B cell (primary cell): ENCODE measurements at regions of chr7 and their contacts with region 1.

Region 1: GRCh38 chr7:149261829-149262617 is at the start of gene ZNF783:
- DNase-seq: peak; percentile 94
- ATAC-seq: peak; percentile 93
- H3K4me3 ChIP-seq: peak within 1 kb of the TSS in 4 of 5 experiments; percentile 64 to 75 (median 68)
- H3K4me3 Mint-ChIP-seq: peak within 1 kb of the TSS; percentile 94
- H3K27ac ChIP-seq: peak within 1 kb of the TSS; percentile 69 to 76
- H3K27ac Mint-ChIP-seq: peak within 1 kb of the TSS; percentile 92
- H3K4me1 ChIP-seq: peaks cover 13 to 17% of the 10 kb centered on the region in 2 donors
- H3K4me1 Mint-ChIP-seq: peaks cover 21% of the 10 kb centered on the region
- H3K27me3 ChIP-seq: no peaks in the 10 kb centered on the region
- H3K27me3 Mint-ChIP-seq: no peaks in the 10 kb centered on the region
- CTCF ChIP-seq: peak; percentile 86
- total RNA-seq, gene ZNF783: 43.8 and 44.8 TPM in 2 replicates

Region 2: GRCh38 chr7:148916186-148916585 is 345.8 kb before region 1 on chr7:
- CTCF ChIA-PET with region 1: no interaction called
- POLR2A ChIA-PET with region 1: no interaction called
- intact Hi-C with region 1: no loop called
- DNase-seq: no peak
- ATAC-seq: no peak
- H3K4me3 ChIP-seq: no peak overlapping the region
- H3K4me3 Mint-ChIP-seq: no peak overlapping the region
- H3K27ac ChIP-seq: no peak overlapping the region
- H3K27ac Mint-ChIP-seq: no peak overlapping the region
- H3K4me1 ChIP-seq: peaks cover 9 to 30% of the 10 kb centered on the region in 2 donors
- H3K4me1 Mint-ChIP-seq: peaks cover 33% of the 10 kb centered on the region
- H3K27me3 ChIP-seq: no peaks in the 10 kb centered on the region
- H3K27me3 Mint-ChIP-seq: no peaks in the 10 kb centered on the region
- CTCF ChIP-seq: no peak

Region 3: GRCh38 chr7:149202831-149203231 is 59.2 kb before region 1 on chr7:
- CTCF ChIA-PET with region 1: no interaction called
- POLR2A ChIA-PET with region 1: no interaction called
- intact Hi-C with region 1: no loop called
- DNase-seq: no peak
- ATAC-seq: no peak
- H3K4me3 ChIP-seq: no peak overlapping the region
- H3K4me3 Mint-ChIP-seq: no peak overlapping the region
- H3K27ac ChIP-seq: no peak overlapping the region
- H3K27ac Mint-ChIP-seq: no peak overlapping the region
- H3K4me1 ChIP-seq: no peaks in the 10 kb centered on the region
- H3K4me1 Mint-ChIP-seq: peaks cover 10% of the 10 kb centered on the region
- H3K27me3 ChIP-seq: no peaks in the 10 kb centered on the region
- H3K27me3 Mint-ChIP-seq: no peaks in the 10 kb centered on the region
- CTCF ChIP-seq: no peak

Region 4: GRCh38 chr7:149284850-149285626 is 23.0 kb after region 1 on chr7:
- CTCF ChIA-PET with region 1: interaction called, 34 read pairs
- POLR2A ChIA-PET with region 1: interaction called, 17 read pairs
- intact Hi-C with region 1: loop called (anchors 1 kb)
- DNase-seq: peak; percentile 97
- ATAC-seq: peak; percentile 97
- H3K4me3 ChIP-seq: peak overlapping the region; percentile 31 to 69 (median 60)
- H3K4me3 Mint-ChIP-seq: peak overlapping the region; percentile 93
- H3K27ac ChIP-seq: peak overlapping the region in 1 of 2 donors; percentile 36
- H3K27ac Mint-ChIP-seq: peak overlapping the region; percentile 74
- H3K4me1 ChIP-seq: peaks cover 20 to 27% of the 10 kb centered on the region in 2 donors
- H3K4me1 Mint-ChIP-seq: peaks cover 32% of the 10 kb centered on the region
- H3K27me3 ChIP-seq: no peaks in the 10 kb centered on the region
- H3K27me3 Mint-ChIP-seq: no peaks in the 10 kb centered on the region
- CTCF ChIP-seq: no peak